ENCODE measurements at regions of chr1 and their contacts with region 1.

Region 1: GRCh38 chr1:27832762-27833161 is 2.2 kb downstream of the PPP1R8 start:
- DNase-seq: no peak
- CTCF ChIP-seq: no peak

Region 2: DNA sequence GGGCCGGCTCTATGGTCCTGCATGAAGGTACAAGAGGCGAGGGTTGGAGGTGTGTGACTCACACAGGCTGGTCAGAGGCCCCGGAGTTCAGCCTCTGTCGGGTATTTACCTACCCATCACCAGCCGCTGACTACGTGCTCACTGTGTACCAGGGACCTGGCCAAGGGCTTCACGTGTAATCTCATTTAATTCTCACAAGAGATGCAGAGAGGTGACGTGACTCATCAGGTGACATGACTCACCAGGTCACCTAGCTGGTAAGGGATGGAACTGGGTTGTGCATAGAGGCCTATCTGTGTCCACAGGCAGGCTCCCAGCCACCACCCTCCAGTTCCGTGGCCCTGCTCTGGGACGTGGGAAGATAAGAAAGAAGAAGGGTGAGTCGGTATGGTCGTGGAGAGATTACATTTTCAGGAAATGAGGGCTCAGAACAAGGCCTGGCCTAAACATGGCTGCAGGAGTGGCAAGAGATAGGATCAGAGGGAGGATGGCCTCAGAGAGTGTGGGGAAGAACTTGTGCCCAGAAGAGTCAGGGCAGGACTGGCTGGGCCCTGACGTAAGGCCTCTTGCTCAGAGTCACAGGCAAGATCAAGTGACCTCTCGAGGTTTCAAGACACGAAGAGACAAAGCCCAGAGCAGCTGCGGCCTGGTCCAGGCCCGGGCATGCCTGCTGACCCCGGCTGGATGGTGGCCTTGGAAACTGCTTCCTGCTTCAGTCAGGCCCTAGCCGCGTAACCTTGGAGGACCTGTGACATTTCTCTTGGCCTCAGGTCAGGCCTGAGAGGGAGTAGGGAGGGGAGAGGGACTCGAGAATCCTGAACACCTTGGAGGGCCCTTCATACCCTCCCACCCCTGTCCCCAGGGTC is 290.1 kb before region 1 on chr1:
- CTCF ChIA-PET with region 1: no interaction called
- POLR2A ChIA-PET with region 1: no interaction called
- DNase-seq: no peak
- CTCF ChIP-seq: no peak

Region 3: GRCh38 chr1:27736252-27736651 is 96.5 kb before region 1 on chr1:
- CTCF ChIA-PET with region 1: no interaction called
- POLR2A ChIA-PET with region 1: no interaction called
- DNase-seq: no peak
- CTCF ChIP-seq: no peak

Region 4: GRCh38 chr1:27858072-27858958 is 25.6 kb after region 1 on chr1:
- CTCF ChIA-PET with region 1: interaction called, 10 read pairs
- POLR2A ChIA-PET with region 1: no interaction called
- DNase-seq: peak; percentile 82
- CTCF ChIP-seq: peak; percentile 99

Region 5: GRCh38 chr1:28064064-28064463 is 231.3 kb after region 1 on chr1:
- CTCF ChIA-PET with region 1: no interaction called
- POLR2A ChIA-PET with region 1: no interaction called
- DNase-seq: no peak
- CTCF ChIP-seq: no peak